Activated B cell treated with CpG ODN at 0.5 μM for 24 hours (primary cell): ENCODE measurements at regions of chr19 and their contacts with region 1.

Region 1: GRCh38 chr19:1039646-1040475 is at the start of gene ABCA7:
- DNase-seq: peak; percentile 99
- ATAC-seq: peak; percentile 78
- H3K4me3 Mint-ChIP-seq: peak within 1 kb of the TSS; percentile 98
- H3K27ac Mint-ChIP-seq: peak within 1 kb of the TSS; percentile 96
- H3K4me1 Mint-ChIP-seq: peaks cover 61% of the 10 kb centered on the region
- H3K27me3 Mint-ChIP-seq: no peaks in the 10 kb centered on the region
- CTCF ChIP-seq: no peak
- total RNA-seq, gene ABCA7: 164 and 188 TPM in 2 replicates

Region 2: GRCh38 chr19:1020868-1021425 is 18.9 kb before region 1 on chr19 and contains the start of gene TMEM259:
- CTCF ChIA-PET with region 1: interaction called, 15 read pairs
- POLR2A ChIA-PET with region 1: interaction called, 365 read pairs
- intact Hi-C with region 1: loop called (anchors 1 kb)
- DNase-seq: peak; percentile 95
- ATAC-seq: peak; percentile 87
- H3K4me3 Mint-ChIP-seq: peak within 1 kb of the TSS; percentile 87
- H3K27ac Mint-ChIP-seq: peak within 1 kb of the TSS; percentile 99
- H3K4me1 Mint-ChIP-seq: peaks cover 53% of the 10 kb centered on the region
- H3K27me3 Mint-ChIP-seq: no peaks in the 10 kb centered on the region
- CTCF ChIP-seq: no peak
- total RNA-seq, gene TMEM259: 223 and 257 TPM in 2 replicates

Region 3: GRCh38 chr19:1026189-1027019 is 13.5 kb before region 1 on chr19 and contains the start of gene CNN2:
- CTCF ChIA-PET with region 1: interaction called, 15 read pairs
- POLR2A ChIA-PET with region 1: interaction called, 365 read pairs
- intact Hi-C with region 1: loop called (anchors 1 kb)
- DNase-seq: peak; percentile 76
- ATAC-seq: peak; percentile 61
- H3K4me3 Mint-ChIP-seq: peak within 1 kb of the TSS; percentile 95
- H3K27ac Mint-ChIP-seq: peak within 1 kb of the TSS; percentile 91
- H3K4me1 Mint-ChIP-seq: peaks cover 29% of the 10 kb centered on the region
- H3K27me3 Mint-ChIP-seq: no peaks in the 10 kb centered on the region
- CTCF ChIP-seq: no peak
- total RNA-seq, gene CNN2: 352 and 371 TPM in 2 replicates

Region 4: GRCh38 chr19:1057176-1057855 is 17.5 kb after region 1 on chr19:
- CTCF ChIA-PET with region 1: no interaction called
- POLR2A ChIA-PET with region 1: interaction called, 24 read pairs
- intact Hi-C with region 1: loop called (anchors 2 kb)
- DNase-seq: no peak
- ATAC-seq: peak; percentile 70
- H3K4me3 Mint-ChIP-seq: no peak overlapping the region
- H3K27ac Mint-ChIP-seq: peak overlapping the region; percentile 83
- H3K4me1 Mint-ChIP-seq: peaks cover 23% of the 10 kb centered on the region
- H3K27me3 Mint-ChIP-seq: no peaks in the 10 kb centered on the region
- CTCF ChIP-seq: no peak

Region 5: GRCh38 chr19:1087813-1088415 is 48.1 kb after region 1 on chr19:
- CTCF ChIA-PET with region 1: no interaction called
- POLR2A ChIA-PET with region 1: interaction called, 26 read pairs
- intact Hi-C with region 1: no loop called
- DNase-seq: peak; percentile 45
- ATAC-seq: peak; percentile 64
- H3K4me3 Mint-ChIP-seq: peak overlapping the region; percentile 66
- H3K27ac Mint-ChIP-seq: peak overlapping the region; percentile 92
- H3K4me1 Mint-ChIP-seq: peaks cover 46% of the 10 kb centered on the region
- H3K27me3 Mint-ChIP-seq: no peaks in the 10 kb centered on the region
- CTCF ChIP-seq: no peak

Region 6: GRCh38 chr19:1094975-1095701 is 55.3 kb after region 1 on chr19 and contains the start of gene POLR2E:
- CTCF ChIA-PET with region 1: no interaction called
- POLR2A ChIA-PET with region 1: interaction called, 4 read pairs
- intact Hi-C with region 1: loop called (anchors 2 kb)
- DNase-seq: peak; percentile 98
- ATAC-seq: peak; percentile 98
- H3K4me3 Mint-ChIP-seq: peak within 1 kb of the TSS; percentile 90
- H3K27ac Mint-ChIP-seq: peak within 1 kb of the TSS; percentile 84
- H3K4me1 Mint-ChIP-seq: peaks cover 45% of the 10 kb centered on the region
- H3K27me3 Mint-ChIP-seq: no peaks in the 10 kb centered on the region
- CTCF ChIP-seq: no peak
- total RNA-seq, gene POLR2E: 173 and 184 TPM in 2 replicates